ENCODE measurements at regions of chr12 and their contacts with region 1.

Region 1: GRCh38 chr12:12916135-12916944 is 25.0 kb downstream of the GPRC5A start:
- DNase-seq: peak; percentile 80 to 85
- H3K4me3 ChIP-seq: peak overlapping the region in 1 of 3 donors; percentile 24
- H3K27ac ChIP-seq: peak overlapping the region; percentile 9 to 75
- H3K4me1 ChIP-seq: no peaks in the 10 kb centered on the region
- H3K27me3 ChIP-seq: no peaks in the 10 kb centered on the region
- CTCF ChIP-seq: peak; percentile 91 to 97 (median 92)
- POLR2A ChIP-seq: no peak

Region 2: GRCh38 chr12:13229504-13229903 is 313.2 kb after region 1 on chr12:
- intact Hi-C with region 1: loop called (anchors 5 kb)
- DNase-seq: no peak
- H3K4me3 ChIP-seq: no peak overlapping the region
- H3K27ac ChIP-seq: no peak overlapping the region
- H3K4me1 ChIP-seq: no peaks in the 10 kb centered on the region
- H3K27me3 ChIP-seq: no peaks in the 10 kb centered on the region
- CTCF ChIP-seq: no peak
- POLR2A ChIP-seq: no peak

Measured in breast epithelium (tissue), 4 donors.